Right ventricle myocardium inferior (tissue), 1 donor: ENCODE measurements at regions of chr1 and their contacts with region 1.

Region 1: DNA sequence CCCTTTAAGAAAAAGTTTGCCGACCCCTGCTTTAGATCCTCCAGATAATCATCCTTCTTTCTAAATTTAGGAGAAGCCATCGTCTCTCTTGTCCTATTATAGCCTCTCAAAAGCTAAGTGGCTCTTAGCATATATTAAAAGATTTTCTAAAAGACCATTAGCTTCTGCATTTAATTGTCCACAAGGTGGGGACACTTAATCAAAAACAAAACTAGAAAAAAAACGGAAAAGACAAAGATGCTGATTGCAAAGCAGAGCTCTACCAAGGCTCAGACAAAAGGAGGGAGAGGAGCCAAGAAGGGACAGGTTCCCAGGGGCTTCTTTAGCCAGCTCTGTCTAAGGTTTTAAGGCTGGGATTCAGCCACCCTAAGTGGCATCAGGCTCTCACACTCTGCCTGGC is 128.3 kb upstream of the HMGB4 start:
- DNase-seq: no peak
- ATAC-seq: no peak

Region 2: DNA sequence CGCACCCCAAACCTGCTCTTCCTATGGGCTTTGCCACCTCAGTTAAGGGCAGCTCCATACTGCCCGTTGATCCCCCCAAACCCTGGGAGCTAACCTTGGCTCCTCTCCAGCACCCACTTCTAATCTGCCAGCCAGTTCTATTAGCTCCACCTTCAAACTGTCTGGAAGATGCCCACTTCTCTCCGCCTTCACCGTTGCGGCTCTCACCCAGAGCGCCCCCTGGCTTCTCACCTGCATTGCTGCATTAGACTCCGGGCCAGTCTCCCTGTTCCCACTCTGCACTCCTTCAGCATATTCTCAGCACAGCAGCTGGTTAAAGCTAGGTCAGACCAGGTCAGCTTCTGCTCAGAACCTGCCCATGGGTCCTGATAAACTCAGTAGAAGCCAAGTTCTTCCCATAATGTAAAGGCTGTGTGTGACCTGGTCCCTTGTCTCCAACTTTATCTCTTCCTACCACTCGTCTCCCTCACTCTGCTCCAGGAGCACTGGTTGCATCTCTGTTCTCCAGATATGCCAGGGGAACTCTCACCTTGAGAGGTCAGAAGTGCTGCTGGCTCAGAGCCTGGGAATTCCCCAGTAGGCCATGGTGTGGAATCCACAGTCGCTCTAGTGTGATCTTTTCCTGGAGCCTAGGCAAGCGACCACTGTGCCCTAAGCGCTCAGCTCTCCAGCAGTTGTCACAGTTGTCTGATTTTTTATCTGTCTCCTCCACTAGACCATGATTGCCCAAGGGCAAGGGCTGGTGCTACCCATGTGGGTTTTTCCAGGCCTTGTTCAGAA is 278.5 kb after region 1 on chr1:
- intact Hi-C with region 1: loop called (anchors 10 kb)
- DNase-seq: no peak
- ATAC-seq: peak; percentile 76